Psoas muscle (tissue), 8 donors: ENCODE measurements at regions of chr12 and their contacts with region 1.

Region 1: DNA sequence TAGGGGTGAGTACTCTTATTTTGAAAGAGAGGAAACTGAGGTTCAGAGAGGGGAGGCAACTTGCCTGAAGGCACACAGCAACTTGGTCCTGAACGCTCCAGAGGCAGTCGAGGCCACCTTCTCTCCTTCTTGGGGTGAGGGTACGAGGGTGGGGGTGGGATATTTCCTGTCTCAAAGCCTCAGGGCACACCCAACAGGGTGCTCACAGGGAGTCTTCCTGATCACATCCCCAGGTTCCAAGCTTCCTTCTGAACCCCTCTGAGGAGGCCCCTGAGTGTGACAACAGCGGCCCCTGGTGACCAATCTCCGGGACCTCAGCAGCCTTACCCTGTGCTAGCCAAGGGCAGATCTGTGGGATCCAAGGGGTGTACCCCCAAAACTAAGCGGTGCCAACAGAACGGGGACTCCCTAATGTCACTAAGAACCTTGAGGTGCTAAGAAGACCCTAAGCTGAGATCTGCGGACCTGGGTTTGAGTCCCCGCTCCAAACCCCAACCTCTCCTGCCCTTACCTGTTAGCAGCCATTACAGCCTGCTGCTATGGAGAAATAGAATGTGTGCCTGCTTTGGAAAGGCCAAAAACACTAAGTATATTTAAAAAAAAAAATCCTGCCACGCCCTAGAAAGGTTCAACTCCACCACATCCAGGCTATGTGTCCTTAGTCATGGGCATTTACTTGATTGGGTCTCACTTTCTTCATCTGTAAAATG is 57.9 kb downstream of the TRPV4 start:
- DNase-seq: peak; percentile 72 to 86
- ATAC-seq: peak; percentile 77 to 91 (median 86)
- H3K4me3 ChIP-seq: no peak overlapping the region
- H3K27ac ChIP-seq: no peak overlapping the region
- H3K4me1 ChIP-seq: peaks cover 10% of the 10 kb centered on the region
- H3K27me3 ChIP-seq: no peaks in the 10 kb centered on the region
- CTCF ChIP-seq: peak; percentile 87

Region 2: DNA sequence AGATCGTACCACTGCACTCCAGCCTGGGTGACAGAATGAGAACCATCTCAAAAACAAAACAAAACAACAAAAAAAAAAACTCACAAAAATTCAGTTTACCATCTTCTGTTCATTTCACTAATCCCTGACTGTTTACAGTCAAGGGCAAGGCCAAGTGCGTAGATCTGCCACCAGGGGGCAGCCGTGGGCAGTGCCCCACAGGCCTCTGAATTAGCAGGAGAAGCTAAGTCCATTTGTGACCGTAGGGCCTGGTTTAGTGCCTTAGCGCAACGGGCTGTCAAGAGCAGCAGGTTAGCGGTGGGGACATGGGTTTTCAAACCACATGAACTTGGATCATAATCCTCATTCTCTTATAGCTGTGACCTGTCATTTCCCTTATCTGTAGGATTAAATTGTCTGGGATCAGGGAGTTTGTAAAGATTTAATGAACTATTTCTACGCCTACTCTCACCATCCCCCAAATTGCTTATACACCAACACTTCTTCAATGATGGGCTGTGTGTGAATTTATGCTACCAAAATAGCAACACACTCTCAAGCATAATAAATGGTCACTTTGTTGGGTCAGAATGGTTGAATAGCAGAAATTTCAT is 347.2 kb before region 1 on chr12:
- intact Hi-C with region 1: loop called in 1 of 2 experiments (anchors 5 kb)
- DNase-seq: peak; percentile 79 to 87
- ATAC-seq: peak; percentile 80 to 94 (median 92)
- H3K4me3 ChIP-seq: no peak overlapping the region
- H3K27ac ChIP-seq: no peak overlapping the region
- H3K4me1 ChIP-seq: peaks cover 6% of the 10 kb centered on the region
- H3K27me3 ChIP-seq: peaks cover 0 to 3% (median 0%) of the 10 kb centered on the region in 3 donors
- CTCF ChIP-seq: peak; percentile 98

Region 3: DNA sequence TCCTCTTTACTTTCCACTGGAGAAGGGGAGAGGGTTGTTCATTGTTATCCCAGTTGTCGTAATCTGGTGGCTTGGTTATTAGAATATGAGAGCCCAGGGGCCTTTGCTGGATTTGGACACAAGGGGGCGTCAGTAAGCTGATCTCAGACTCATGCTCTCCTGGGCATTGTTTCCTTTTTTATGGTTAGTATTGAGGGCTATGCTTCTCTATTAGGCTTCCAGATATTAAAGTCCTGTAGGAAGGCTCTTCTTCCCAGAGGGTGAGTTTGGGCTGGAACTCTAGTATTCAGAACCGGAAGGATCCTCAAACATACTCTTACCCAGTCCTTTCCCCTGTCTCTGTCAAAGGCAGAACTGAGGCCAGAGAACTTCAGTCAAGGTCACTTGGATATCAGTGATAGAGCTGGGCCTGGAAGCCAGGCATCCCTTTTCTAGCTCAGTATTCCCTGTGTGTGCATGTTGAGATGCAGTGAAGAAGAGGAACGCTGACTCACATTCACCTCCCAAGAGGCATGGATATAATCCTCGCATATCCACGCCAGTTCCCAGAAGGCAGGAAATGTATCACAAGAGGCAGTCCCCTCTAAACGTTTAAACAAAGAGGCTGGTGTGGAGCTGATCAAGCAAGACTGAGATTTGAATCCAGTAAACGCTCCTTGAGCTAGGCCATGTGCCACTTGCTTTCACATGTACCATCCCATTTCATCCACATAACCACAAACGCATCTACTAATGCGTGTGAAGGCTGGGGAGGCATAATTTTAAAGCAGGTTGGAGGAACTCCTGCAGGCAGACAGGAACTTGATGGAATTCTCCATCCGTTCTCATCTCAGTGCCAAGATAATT is 256.3 kb before region 1 on chr12:
- intact Hi-C with region 1: loop called (anchors 1 to 2 kb)
- DNase-seq: peak; percentile 50 to 74
- ATAC-seq: peak; percentile 70 to 86 (median 79)
- H3K4me3 ChIP-seq: no peak overlapping the region
- H3K27ac ChIP-seq: peak overlapping the region; percentile 69
- H3K4me1 ChIP-seq: peaks cover 5% of the 10 kb centered on the region
- H3K27me3 ChIP-seq: no peaks in the 10 kb centered on the region
- CTCF ChIP-seq: peak; percentile 81

Region 4: DNA sequence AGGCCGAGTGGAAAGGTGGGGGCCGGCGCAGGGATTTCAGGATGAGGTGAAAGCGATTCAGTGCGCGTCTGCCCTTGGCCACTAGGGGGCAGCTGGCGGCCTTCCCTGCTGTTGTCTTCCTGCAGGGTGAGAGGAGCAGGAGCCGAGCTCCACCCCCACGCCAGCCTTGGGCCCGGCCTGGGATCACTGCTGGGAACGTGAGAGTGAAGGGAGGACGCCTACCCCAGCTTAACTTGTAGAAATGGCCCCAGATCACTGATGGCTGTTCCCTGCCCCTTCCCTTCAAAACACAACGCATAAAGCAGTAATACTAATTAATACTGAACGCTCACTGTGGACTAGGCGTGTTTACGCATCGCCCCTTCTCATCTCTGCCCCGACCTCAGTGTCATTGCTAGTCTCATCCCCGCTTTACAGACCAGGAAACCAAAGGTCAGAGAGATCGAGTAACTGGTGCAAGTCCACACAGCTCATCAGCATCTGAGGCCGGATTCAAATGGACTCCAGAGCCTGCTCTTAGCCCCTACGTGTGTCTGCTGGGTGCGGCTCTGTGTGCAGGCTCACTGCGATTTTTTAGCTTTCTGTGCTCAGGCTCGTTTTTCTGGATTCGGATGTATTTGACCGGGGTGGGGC is 177.4 kb before region 1 on chr12:
- intact Hi-C with region 1: loop called (anchors 1 kb)
- DNase-seq: peak; percentile 87 to 93
- ATAC-seq: peak; percentile 76 to 90 (median 82)
- H3K4me3 ChIP-seq: no peak overlapping the region
- H3K27ac ChIP-seq: no peak overlapping the region
- H3K4me1 ChIP-seq: peaks cover 34% of the 10 kb centered on the region
- H3K27me3 ChIP-seq: no peaks in the 10 kb centered on the region
- CTCF ChIP-seq: peak; percentile 95

Region 5: GRCh38 chr12:109719236-109720022 is 55.9 kb before region 1 on chr12:
- intact Hi-C with region 1: loop called (anchors 5 kb)
- DNase-seq: no peak
- ATAC-seq: no peak
- H3K4me3 ChIP-seq: no peak overlapping the region
- H3K27ac ChIP-seq: peak overlapping the region; percentile 82
- H3K4me1 ChIP-seq: peaks cover 77% of the 10 kb centered on the region
- H3K27me3 ChIP-seq: no peaks in the 10 kb centered on the region
- CTCF ChIP-seq: peak; percentile 26